PC-3 (cell line): ENCODE measurements at regions of chr12 and their contacts with region 1.

Region 1: DNA sequence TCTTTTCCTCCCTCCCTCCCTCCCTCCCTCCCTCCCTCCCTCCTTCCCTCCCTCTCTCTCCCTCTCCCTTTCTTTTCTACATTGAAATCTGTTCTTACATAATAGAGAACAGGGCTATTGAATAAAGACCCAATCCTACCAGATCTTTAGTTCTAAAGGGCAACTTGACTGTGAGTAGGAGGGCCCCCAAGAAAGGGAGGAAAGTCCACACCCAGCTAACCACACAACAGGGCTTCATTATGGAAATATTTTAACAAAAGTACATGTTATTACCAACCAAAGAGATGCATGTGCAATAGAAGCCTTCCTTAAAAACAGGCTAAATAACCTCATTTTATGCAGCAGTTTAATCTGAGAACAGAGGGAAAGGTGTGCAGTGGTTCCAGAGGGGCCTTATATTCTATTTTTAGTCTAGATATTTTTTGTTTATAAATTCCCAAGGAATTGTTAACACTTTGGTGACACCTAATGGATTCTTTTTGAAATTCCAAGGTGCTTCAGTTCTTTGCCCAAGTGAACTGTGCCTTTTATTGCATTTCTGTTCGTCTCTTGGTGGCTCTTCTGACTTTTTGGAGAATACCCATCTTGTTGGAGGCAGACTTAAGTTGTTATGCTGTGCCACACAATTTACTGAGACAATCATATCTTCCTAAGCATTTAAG is 63.0 kb downstream of the GNS start:
- DNase-seq: peak; percentile 73
- ATAC-seq: peak; percentile 47
- H3K4me3 ChIP-seq: no peak overlapping the region
- H3K27ac ChIP-seq: no peak overlapping the region
- H3K4me1 ChIP-seq: no peaks in the 10 kb centered on the region
- H3K27me3 ChIP-seq: no peaks in the 10 kb centered on the region
- CTCF ChIP-seq: peak; percentile 73

Region 2: GRCh38 chr12:63826006-63826585 is 870.1 kb before region 1 on chr12:
- CTCF ChIA-PET with region 1: no interaction called
- POLR2A ChIA-PET with region 1: no interaction called
- intact Hi-C with region 1: loop called (anchors 5 kb)
- DNase-seq: peak; percentile 80
- ATAC-seq: peak; percentile 84
- H3K4me3 ChIP-seq: no peak overlapping the region
- H3K27ac ChIP-seq: no peak overlapping the region
- H3K4me1 ChIP-seq: no peaks in the 10 kb centered on the region
- H3K27me3 ChIP-seq: no peaks in the 10 kb centered on the region
- CTCF ChIP-seq: peak; percentile 92

Region 3: DNA sequence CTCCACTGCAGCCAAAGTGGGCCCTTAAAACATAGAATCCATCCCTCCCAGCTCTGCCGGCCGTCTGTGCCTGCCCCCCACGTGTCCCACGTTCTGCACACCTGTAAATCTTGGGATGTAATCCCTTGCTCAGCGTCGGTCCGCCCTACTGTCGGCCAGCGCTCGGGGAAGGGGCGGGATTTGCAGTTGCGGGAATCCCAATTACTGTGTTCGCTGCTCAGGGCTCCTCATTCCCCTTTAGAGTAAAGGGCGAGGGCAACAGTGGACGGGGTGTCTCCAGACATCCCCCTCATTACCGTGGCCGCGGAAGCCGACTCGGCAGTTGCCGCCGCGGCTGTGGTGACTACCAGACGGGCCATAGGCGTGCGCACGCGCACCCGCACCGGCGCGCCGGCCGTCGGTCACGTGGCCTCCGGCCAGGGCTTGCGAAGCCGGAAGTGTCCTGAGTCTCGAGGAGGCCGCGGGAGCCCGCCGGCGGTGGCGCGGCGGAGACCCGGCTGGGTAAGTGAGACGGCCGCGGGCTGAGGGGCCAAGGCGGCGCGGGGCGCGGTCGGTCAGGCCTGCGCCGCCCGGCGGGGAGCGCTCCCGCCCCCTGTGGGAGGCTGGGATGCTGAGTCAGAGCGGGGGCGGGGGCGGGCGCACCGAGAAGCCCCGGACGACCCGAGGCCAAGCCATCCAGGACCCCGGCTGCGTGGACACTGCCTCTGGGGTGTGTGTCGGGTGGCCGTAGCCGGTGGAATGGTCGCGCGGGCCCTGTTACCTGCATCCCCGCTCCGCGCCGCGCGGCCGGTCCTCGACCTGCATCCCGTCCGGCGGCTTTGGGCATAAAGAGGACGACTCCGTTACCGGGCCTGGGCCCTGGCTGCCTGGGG is 244.3 kb before region 1 on chr12 and contains the start of gene TBK1:
- CTCF ChIA-PET with region 1: no interaction called
- POLR2A ChIA-PET with region 1: no interaction called
- intact Hi-C with region 1: loop called (anchors 5 kb)
- DNase-seq: peak; percentile 90
- ATAC-seq: peak; percentile 80
- H3K4me3 ChIP-seq: peak within 1 kb of the TSS; percentile 98
- H3K27ac ChIP-seq: peak within 1 kb of the TSS; percentile 94
- H3K4me1 ChIP-seq: peaks cover 24% of the 10 kb centered on the region
- H3K27me3 ChIP-seq: no peaks in the 10 kb centered on the region
- CTCF ChIP-seq: no peak
- total RNA-seq, gene TBK1: 23.1 and 23.7 TPM in 2 replicates

Region 4: GRCh38 chr12:64550755-64551154 is 145.5 kb before region 1 on chr12:
- CTCF ChIA-PET with region 1: interaction called, 15 read pairs
- POLR2A ChIA-PET with region 1: no interaction called
- intact Hi-C with region 1: loop called (anchors 1 kb)
- DNase-seq: no peak
- ATAC-seq: no peak
- H3K4me3 ChIP-seq: no peak overlapping the region
- H3K27ac ChIP-seq: no peak overlapping the region
- H3K4me1 ChIP-seq: no peaks in the 10 kb centered on the region
- H3K27me3 ChIP-seq: no peaks in the 10 kb centered on the region
- CTCF ChIP-seq: no peak

Region 5: GRCh38 chr12:64608901-64609535 is 87.2 kb before region 1 on chr12:
- CTCF ChIA-PET with region 1: interaction called, 5 read pairs
- POLR2A ChIA-PET with region 1: no interaction called
- intact Hi-C with region 1: loop called (anchors 1 kb)
- DNase-seq: peak; percentile 86
- ATAC-seq: peak; percentile 54
- H3K4me3 ChIP-seq: peak overlapping the region; percentile 69
- H3K27ac ChIP-seq: peak overlapping the region; percentile 78
- H3K4me1 ChIP-seq: peaks cover 10% of the 10 kb centered on the region; the same call in 1 of the 2 replicates
- H3K27me3 ChIP-seq: no peaks in the 10 kb centered on the region
- CTCF ChIP-seq: no peak

Region 6: GRCh38 chr12:64625243-64626077 is 70.8 kb before region 1 on chr12:
- CTCF ChIA-PET with region 1: interaction called, 10 read pairs
- POLR2A ChIA-PET with region 1: no interaction called
- intact Hi-C with region 1: loop called (anchors 5 kb)
- DNase-seq: peak; percentile 94
- ATAC-seq: peak; percentile 77
- H3K4me3 ChIP-seq: peak overlapping the region; percentile 50
- H3K27ac ChIP-seq: peak overlapping the region; percentile 97
- H3K4me1 ChIP-seq: peaks cover 48% of the 10 kb centered on the region
- H3K27me3 ChIP-seq: no peaks in the 10 kb centered on the region
- CTCF ChIP-seq: peak; percentile 14; the same call in 1 of the 2 replicates